CD8-positive, alpha-beta T cell (primary cell): ENCODE measurements at regions of chr9 and their contacts with region 1.

Region 1: GRCh38 chr9:28127101-28127500 is 553.8 kb upstream of the C9orf72 start:
- DNase-seq: no peak
- ATAC-seq: no peak
- H3K4me3 ChIP-seq: no peak overlapping the region
- H3K4me3 Mint-ChIP-seq: no peak overlapping the region
- H3K27ac ChIP-seq: no peak overlapping the region
- H3K27ac Mint-ChIP-seq: no peak overlapping the region
- H3K4me1 ChIP-seq: no peaks in the 10 kb centered on the region
- H3K4me1 Mint-ChIP-seq: no peaks in the 10 kb centered on the region
- H3K27me3 ChIP-seq: no peaks in the 10 kb centered on the region
- H3K27me3 Mint-ChIP-seq: no peaks in the 10 kb centered on the region
- CTCF ChIP-seq: no peak

Region 2: GRCh38 chr9:27977931-27978330 is 149.2 kb before region 1 on chr9:
- CTCF ChIA-PET with region 1: no interaction called
- POLR2A ChIA-PET with region 1: no interaction called
- intact Hi-C with region 1: no loop called
- DNase-seq: no peak
- ATAC-seq: no peak
- H3K4me3 ChIP-seq: no peak overlapping the region
- H3K4me3 Mint-ChIP-seq: no peak overlapping the region
- H3K27ac ChIP-seq: no peak overlapping the region
- H3K27ac Mint-ChIP-seq: no peak overlapping the region
- H3K4me1 ChIP-seq: no peaks in the 10 kb centered on the region
- H3K4me1 Mint-ChIP-seq: no peaks in the 10 kb centered on the region
- H3K27me3 ChIP-seq: no peaks in the 10 kb centered on the region
- H3K27me3 Mint-ChIP-seq: no peaks in the 10 kb centered on the region
- CTCF ChIP-seq: no peak

Region 3: DNA sequence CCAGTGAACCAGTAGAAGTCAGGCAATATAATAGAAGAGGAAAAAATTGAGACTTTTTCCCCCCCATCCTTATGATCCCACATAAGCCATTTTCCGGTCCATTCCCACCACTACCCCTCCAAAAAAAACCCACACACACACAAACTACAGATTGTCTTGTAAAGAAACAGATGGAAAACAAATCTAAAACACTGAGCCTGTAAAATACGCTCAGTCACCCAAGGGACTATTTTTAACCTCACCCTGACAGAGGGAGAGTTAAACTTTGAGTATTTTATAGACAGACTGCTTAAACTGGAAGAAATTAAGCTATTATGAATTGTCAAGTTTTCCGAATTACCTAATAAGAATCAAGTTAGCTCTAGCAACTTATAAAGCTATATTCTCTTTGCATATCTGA is 82.0 kb before region 1 on chr9:
- CTCF ChIA-PET with region 1: no interaction called
- POLR2A ChIA-PET with region 1: no interaction called
- intact Hi-C with region 1: loop called in 1 of 2 experiments (anchors 5 kb)
- DNase-seq: no peak
- ATAC-seq: no peak
- H3K4me3 ChIP-seq: no peak overlapping the region
- H3K4me3 Mint-ChIP-seq: no peak overlapping the region
- H3K27ac ChIP-seq: no peak overlapping the region
- H3K27ac Mint-ChIP-seq: no peak overlapping the region
- H3K4me1 ChIP-seq: no peaks in the 10 kb centered on the region
- H3K4me1 Mint-ChIP-seq: no peaks in the 10 kb centered on the region
- H3K27me3 ChIP-seq: no peaks in the 10 kb centered on the region
- H3K27me3 Mint-ChIP-seq: no peaks in the 10 kb centered on the region
- CTCF ChIP-seq: no peak

Region 4: DNA sequence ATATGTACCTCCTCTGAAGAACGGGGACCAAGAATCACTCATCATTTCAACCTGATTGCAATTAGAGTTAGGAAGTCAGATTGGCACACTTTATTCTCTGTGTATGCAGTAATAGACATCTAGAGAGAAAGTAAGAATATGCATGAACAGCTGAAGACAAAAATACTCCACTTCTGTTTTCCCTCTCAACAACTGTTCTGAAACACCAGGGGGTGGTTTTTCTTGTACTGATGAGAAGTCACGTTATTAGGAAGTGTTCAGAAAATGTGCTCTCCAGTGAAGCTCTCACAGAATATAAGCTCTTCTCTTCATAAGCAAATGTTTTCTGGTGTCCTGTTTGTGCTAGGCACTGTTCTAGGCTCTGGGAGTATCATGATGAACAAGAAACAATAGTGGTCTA is 22.1 kb before region 1 on chr9:
- CTCF ChIA-PET with region 1: no interaction called
- POLR2A ChIA-PET with region 1: no interaction called
- intact Hi-C with region 1: no loop called
- DNase-seq: no peak
- ATAC-seq: no peak
- H3K4me3 ChIP-seq: no peak overlapping the region
- H3K4me3 Mint-ChIP-seq: no peak overlapping the region
- H3K27ac ChIP-seq: no peak overlapping the region
- H3K27ac Mint-ChIP-seq: no peak overlapping the region
- H3K4me1 ChIP-seq: no peaks in the 10 kb centered on the region
- H3K4me1 Mint-ChIP-seq: no peaks in the 10 kb centered on the region
- H3K27me3 ChIP-seq: peaks cover 0 to 3% of the 10 kb centered on the region in 2 experiments
- H3K27me3 Mint-ChIP-seq: no peaks in the 10 kb centered on the region
- CTCF ChIP-seq: no peak